ENCODE measurements at regions of chr2 and their contacts with region 1.

Region 1: DNA sequence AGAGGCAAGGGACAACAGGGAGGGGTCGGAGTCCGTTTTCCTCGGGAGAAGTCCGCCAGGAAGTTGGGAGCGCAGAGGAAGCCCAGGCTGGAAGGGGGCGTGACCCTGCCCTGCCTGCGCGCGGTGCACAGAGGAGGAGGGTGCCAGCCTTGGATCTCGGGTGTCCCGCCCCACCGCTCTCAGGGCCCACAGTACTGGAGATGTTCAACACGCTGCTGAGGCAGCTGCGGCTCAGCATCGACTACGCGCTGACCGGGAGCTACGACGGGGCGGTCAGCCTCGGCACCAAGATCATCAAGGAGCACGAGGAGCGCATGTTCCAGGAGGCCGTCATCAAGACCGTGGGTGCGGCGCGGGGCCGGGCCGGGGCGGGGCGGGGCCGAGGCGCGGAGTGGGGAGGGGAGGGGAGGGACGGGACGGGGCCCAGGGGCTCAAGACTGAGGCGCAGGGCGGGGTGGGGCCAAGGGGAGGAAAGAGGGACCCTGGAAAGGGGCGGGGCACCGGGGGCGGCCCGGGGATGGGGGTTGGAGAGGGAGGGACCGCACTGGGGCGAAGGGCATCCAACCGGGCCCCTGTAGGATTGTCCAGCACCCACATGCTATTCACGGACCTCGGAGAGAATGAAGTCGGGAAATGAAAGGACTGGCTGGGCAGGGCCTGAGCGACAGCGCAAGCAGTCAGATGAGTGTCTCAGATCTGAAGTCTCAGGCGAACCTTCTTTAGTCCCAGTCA is 36.6 kb downstream of the POMC start:
- DNase-seq: no peak
- H3K4me3 Mint-ChIP-seq: peak overlapping the region; percentile 55
- H3K27ac Mint-ChIP-seq: no peak overlapping the region
- H3K4me1 Mint-ChIP-seq: peaks cover 11% of the 10 kb centered on the region
- H3K27me3 Mint-ChIP-seq: peaks cover 51% of the 10 kb centered on the region

Region 2: DNA sequence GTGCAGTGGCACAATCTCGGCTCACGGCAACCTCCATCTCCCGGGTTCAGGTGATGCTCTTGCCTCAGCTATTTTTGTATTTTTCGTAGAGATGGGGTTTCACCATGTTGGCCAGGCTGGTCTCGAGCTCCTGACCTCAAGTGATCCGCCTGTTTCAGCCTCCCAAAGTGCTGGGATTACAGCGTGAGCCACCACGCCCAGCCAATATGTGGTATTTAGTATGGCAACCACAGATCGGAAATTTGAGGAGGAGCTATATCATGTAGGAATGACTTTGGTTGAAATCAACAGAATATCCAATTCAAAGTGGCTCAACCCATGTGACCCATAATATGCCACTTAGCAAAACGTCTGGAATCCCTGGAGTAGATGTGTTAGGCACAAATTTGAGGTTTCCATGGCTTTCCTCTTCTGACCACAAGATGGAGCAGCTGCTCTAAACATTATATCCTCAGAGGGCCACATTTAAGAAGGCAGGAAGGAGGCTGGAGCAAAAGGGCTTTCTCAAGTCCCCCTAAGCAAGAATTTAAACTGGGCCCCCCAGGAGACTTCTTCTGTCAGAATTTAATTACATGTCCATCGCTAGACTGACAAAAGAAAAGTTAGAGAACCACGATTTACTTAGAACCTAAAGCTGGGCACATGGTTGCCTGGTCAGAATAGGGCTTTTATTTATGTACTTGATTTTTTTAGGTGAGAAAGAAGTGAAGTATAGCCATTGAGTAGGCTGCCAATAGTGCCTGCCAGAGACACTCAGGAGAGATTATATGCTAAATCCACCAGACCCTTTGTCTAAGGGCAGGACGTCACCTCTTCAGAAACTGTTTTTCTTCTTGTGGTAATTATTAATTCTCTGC is 721.8 kb before region 1 on chr2:
- CTCF ChIA-PET with region 1: interaction called, 16 read pairs
- POLR2A ChIA-PET with region 1: no interaction called
- DNase-seq: peak; percentile 29
- H3K4me3 Mint-ChIP-seq: no peak overlapping the region
- H3K27ac Mint-ChIP-seq: no peak overlapping the region
- H3K4me1 Mint-ChIP-seq: peaks cover 2% of the 10 kb centered on the region
- H3K27me3 Mint-ChIP-seq: peaks cover 4% of the 10 kb centered on the region

Region 3: DNA sequence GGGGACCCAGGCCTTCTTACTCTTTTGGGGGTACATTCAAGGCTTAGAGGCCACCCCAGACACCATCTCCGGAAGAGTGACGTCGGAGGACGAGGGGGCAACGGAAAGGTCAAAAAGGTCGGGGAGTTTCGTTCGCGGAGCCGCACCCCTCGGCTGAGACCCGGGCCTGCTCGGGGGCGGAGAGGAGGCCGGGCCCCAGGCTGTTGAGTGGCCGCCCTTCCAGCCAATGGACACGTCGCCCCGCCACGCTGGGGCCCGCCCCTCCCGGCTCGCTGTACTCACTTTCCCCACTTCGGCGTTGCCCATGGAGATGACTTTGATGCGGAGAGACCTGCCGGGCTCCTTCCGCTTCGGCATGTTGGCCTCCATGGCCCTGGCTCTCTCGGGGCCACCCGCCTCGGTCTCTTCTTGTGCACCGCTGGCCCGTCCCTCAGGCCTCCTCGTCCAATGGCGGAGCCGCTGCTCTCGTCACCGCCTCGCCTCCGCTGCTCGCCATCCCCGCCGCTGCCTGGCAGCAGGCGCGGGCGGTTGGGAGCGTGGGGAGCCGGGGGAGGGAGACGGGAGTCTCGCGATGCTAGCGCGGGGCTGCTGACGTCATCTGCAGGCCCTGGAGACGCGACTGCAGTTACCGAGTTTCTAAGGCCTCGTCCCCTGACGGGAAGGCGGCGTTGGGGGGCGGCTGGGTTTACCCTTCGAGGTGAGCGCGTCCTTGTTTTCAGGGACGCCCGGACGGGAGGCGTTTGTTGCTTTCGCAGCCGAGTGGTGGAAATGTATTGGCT is 160.0 kb before region 1 on chr2 and contains the start of gene DNAJC27:
- CTCF ChIA-PET with region 1: interaction called, 151 read pairs
- POLR2A ChIA-PET with region 1: interaction called, 8 read pairs
- DNase-seq: peak; percentile 98
- H3K4me3 Mint-ChIP-seq: peak within 1 kb of the TSS; percentile 97
- H3K27ac Mint-ChIP-seq: peak within 1 kb of the TSS; percentile 99
- H3K4me1 Mint-ChIP-seq: peaks cover 20% of the 10 kb centered on the region
- H3K27me3 Mint-ChIP-seq: no peaks in the 10 kb centered on the region
- total RNA-seq, gene DNAJC27: 7.6 to 8.1 TPM

Region 4: DNA sequence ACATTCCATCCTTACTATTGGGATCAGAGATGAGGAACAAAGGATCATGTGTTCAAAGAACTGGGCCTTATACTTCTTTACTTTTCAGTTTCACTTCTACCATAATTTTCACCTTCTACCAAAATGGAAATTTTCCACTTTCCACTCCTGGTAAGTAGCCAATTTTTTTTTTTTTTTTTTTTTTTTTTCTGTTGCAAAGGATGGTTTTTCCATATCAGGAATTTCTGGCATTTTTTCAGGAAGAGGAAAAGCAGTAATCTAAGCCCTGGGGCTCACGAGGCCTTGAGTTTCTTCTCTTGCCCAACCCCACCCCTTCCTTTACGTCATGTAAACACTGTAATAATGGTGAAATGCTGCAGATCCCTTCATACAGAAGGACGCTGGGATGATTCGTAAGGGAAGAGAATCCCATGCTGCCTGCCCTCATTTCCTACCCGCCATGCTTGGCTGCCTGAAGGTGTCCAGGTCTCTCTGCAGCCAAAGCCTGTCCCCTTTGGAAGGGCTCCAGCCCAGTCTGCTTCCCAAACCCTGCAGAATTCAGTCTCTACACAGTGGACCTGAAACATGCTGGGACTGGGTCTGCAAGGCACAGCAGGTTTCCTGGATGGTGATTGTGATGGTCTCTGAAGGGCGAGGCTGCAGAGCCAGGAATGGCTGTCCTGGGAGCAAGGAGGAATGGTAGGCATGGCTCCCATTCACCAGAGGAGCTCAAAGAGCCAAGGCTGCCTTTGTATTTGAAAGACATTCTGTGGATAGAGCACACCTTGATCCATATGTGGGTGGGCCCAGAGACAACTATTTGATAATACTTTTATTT is 32.9 kb before region 1 on chr2:
- CTCF ChIA-PET with region 1: no interaction called
- POLR2A ChIA-PET with region 1: no interaction called
- DNase-seq: no peak
- H3K4me3 Mint-ChIP-seq: no peak overlapping the region
- H3K27ac Mint-ChIP-seq: no peak overlapping the region
- H3K4me1 Mint-ChIP-seq: peaks cover 1% of the 10 kb centered on the region
- H3K27me3 Mint-ChIP-seq: peaks cover 12% of the 10 kb centered on the region